HepG2 (cell line): ENCODE measurements at regions of chr2 and their contacts with region 1.

Region 1: DNA sequence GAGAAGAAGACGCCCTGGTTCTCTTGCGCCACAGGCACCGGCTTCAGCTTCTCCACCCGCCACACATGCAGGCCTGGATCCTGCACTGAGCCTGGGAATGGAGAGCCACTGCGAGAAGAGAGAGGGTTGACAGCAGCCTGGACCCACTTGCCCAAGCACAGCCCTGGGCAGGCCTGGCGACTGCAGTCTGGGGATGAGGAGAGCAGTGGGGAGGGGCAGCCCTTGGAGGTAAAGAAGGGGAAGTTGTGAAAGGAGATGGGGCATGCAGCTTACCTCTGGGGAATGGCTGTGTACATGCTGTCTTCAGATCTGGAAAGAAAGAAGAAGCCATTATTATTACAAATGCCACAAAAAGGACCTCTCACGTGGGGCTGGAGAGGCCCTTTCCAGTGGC is 8.3 kb downstream of the CAPG start:
- DNase-seq: no peak
- ATAC-seq: peak; percentile 50
- H3K4me3 ChIP-seq: no peak overlapping the region
- H3K27ac ChIP-seq: no peak overlapping the region
- H3K4me1 ChIP-seq: peaks cover 56% of the 10 kb centered on the region
- H3K27me3 ChIP-seq: no peaks in the 10 kb centered on the region
- CTCF ChIP-seq: no peak
- EP300 ChIP-seq: no peak
- POLR2A ChIP-seq: no peak
- RAD21 ChIP-seq: no peak

Region 2: DNA sequence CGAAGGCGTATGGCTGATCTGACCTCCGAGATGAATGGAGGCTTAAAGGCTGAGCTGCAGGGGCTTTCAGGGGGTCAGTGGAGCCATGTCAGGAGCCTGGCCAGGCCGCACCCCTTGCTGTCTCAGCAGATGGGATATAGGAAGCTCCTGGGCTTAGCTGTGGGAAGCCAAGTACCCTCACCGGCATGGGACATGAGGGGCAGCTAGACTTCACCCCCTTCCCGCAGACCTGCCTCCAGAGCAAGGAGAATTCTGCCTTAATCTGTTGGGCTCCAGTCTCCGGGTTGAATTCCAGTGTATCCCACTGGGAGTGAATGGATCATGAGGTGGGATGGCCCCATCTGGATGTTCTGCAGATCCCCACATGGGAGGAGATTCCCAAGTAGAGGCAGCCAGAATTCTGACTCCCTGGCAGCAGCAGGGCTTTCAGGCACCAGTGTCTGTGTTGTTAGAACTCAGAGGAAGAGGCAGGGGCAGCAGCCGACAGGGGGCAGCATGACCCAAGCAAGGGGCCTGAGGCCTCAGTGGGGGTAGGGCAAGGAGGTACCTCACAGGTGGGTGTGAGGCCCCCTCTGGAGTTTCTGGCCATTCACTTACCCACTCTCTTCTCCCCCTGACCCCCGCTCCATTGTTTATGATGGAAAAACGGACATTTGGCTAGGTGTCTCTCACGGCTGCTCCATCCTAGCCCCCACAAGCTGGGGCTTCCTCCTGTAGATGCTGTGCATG is 10.7 kb before region 1 on chr2:
- CTCF ChIA-PET with region 1: no interaction called
- POLR2A ChIA-PET with region 1: no interaction called
- in situ Hi-C with region 1: no loop called
- intact Hi-C with region 1: loop called (anchors 2 kb)
- DNase-seq: peak; percentile 59
- ATAC-seq: peak; percentile 92
- H3K4me3 ChIP-seq: no peak overlapping the region
- H3K27ac ChIP-seq: no peak overlapping the region
- H3K4me1 ChIP-seq: no peaks in the 10 kb centered on the region
- H3K27me3 ChIP-seq: no peaks in the 10 kb centered on the region
- CTCF ChIP-seq: peak; percentile 98
- EP300 ChIP-seq: no peak
- POLR2A ChIP-seq: no peak
- RAD21 ChIP-seq: peak; percentile 98